Tibial artery (tissue), 4 donors: ENCODE measurements at regions of chrX and their contacts with region 1.

Region 1: DNA sequence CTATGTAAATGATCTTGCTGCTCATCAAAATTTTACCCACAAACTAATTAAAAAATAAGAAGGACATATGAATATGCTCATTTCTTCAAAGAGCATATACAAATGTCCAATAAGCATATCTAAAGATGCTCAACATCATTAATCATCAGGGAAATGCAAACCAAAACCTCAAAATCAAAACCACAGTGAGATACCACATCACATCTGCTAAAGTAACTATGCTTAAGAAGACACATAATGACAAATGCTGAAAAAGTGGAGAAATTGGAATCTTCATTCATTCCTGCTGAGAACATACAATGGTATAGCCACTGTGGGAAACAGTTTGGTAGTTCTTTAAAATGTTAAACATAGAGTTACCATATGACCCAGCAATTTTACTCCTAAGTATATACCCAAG is 81.9 kb downstream of the AFF2 start:
- DNase-seq: no peak
- H3K4me3 ChIP-seq: no peak overlapping the region
- H3K27ac ChIP-seq: no peak overlapping the region
- H3K4me1 ChIP-seq: no peaks in the 10 kb centered on the region
- H3K27me3 ChIP-seq: no peaks in the 10 kb centered on the region
- CTCF ChIP-seq: no peak

Region 2: GRCh38 chrX:148504506-148504905 is 77.8 kb before region 1 on chrX:
- intact Hi-C with region 1: loop called (anchors 2 kb)
- DNase-seq: no peak
- H3K4me3 ChIP-seq: no peak overlapping the region
- H3K27ac ChIP-seq: no peak overlapping the region
- H3K4me1 ChIP-seq: peaks cover 0 to 15% (median 7%) of the 10 kb centered on the region in 4 donors
- H3K27me3 ChIP-seq: peaks cover 0 to 16% of the 10 kb centered on the region in 2 donors
- CTCF ChIP-seq: no peak